ENCODE measurements at regions of chr3 and their contacts with region 1.

Region 1: GRCh38 chr3:190401963-190402362 is 14.0 kb downstream of the CLDN16 start:
- DNase-seq: peak; percentile 77
- H3K4me3 ChIP-seq: no peak overlapping the region
- H3K27ac ChIP-seq: peak overlapping the region; percentile 61
- H3K4me1 ChIP-seq: peaks cover 13% of the 10 kb centered on the region
- H3K27me3 ChIP-seq: no peaks in the 10 kb centered on the region
- CTCF ChIP-seq: no peak
- POLR2A ChIP-seq: no peak

Region 2: DNA sequence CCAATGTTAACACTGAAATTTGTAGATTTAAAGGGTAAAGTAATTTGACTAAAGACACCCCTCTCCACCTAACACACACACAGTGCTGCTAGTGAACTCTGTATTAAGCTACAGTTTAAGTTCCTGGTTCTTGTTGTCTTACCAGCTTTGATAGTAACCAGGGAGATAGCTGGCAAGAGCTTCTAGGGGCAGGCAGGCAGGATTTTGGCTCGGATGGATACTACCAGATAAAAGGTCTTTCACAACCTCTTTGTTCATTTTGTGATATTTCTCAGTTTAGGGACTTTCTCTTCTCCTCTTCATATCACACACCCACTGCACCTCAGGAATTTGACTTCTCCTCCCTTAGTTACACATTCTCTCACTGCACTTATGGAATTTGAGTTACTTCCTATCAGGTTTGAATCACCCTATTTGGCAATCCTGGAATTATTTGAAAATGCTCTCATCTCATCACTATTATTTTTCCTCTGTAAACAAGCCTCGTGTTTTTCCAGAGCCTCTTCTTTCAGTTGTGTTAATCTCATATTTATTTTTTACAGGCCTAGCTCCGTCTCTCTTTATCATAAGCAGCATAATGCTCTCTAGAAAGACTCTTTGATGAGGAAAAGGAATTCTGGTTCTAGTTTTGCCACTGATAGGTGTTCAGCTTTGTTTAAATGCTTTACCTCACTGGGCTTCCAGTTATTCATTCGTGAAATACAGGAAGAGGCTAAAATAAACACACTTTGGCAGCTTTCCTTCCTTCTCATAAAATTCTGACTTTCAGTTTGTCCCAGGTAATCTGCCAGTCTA is 56.7 kb before region 1 on chr3:
- CTCF ChIA-PET with region 1: interaction called, 3 read pairs
- POLR2A ChIA-PET with region 1: no interaction called
- dilution Hi-C with region 1: no loop called
- intact Hi-C with region 1: loop called (anchors 1 kb)
- DNase-seq: peak; percentile 75
- H3K4me3 ChIP-seq: peak overlapping the region in 1 of 3 experiments; percentile 48
- H3K27ac ChIP-seq: peak overlapping the region; percentile 89
- H3K4me1 ChIP-seq: peaks cover 21% of the 10 kb centered on the region
- H3K27me3 ChIP-seq: no peaks in the 10 kb centered on the region
- CTCF ChIP-seq: no peak
- POLR2A ChIP-seq: peak; percentile 40

Region 3: DNA sequence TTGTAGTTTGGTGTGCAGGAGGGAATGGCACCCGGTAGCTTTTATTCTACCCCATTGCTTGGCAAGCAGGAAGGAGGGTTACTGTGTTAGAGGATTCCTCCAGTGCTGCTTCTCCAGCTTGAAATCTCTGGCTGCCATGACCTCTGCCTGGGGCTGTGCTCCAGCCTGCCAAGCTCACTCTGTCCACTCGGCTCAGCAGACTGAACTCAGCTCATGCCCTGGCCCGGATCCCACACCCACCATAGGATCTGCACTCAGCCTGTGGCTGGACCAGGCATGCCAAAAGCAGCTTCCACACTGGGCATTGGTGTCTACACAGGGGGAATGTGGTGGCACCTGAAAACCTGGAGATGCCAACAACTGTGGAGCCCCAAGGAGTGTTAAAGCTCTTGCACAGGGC is 12.3 kb after region 1 on chr3:
- CTCF ChIA-PET with region 1: interaction called, 17 read pairs
- POLR2A ChIA-PET with region 1: no interaction called
- dilution Hi-C with region 1: no loop called
- intact Hi-C with region 1: no loop called
- DNase-seq: no peak
- H3K4me3 ChIP-seq: no peak overlapping the region
- H3K27ac ChIP-seq: no peak overlapping the region
- H3K4me1 ChIP-seq: no peaks in the 10 kb centered on the region
- H3K27me3 ChIP-seq: no peaks in the 10 kb centered on the region
- CTCF ChIP-seq: no peak
- POLR2A ChIP-seq: no peak